ENCODE measurements at regions of chr4 and their contacts with region 1.

Region 1: GRCh38 chr4:52861879-52862616 is at the start of gene RASL11B:
- H3K4me3 Mint-ChIP-seq: peak within 1 kb of the TSS; percentile 84
- H3K27ac Mint-ChIP-seq: no peak within 1 kb of the TSS
- H3K4me1 Mint-ChIP-seq: peaks cover 7% of the 10 kb centered on the region
- H3K27me3 Mint-ChIP-seq: peaks cover 48% of the 10 kb centered on the region

Region 2: GRCh38 chr4:52560844-52561280 is 301.2 kb before region 1 on chr4:
- intact Hi-C with region 1: no loop called
- H3K4me3 Mint-ChIP-seq: no peak overlapping the region
- H3K27ac Mint-ChIP-seq: no peak overlapping the region
- H3K4me1 Mint-ChIP-seq: no peaks in the 10 kb centered on the region
- H3K27me3 Mint-ChIP-seq: no peaks in the 10 kb centered on the region

Region 3: GRCh38 chr4:52659001-52659721 is 202.9 kb before region 1 on chr4 and contains the start of gene USP46:
- intact Hi-C with region 1: loop called (anchors 10 kb)
- H3K4me3 Mint-ChIP-seq: peak within 1 kb of the TSS; percentile 83
- H3K27ac Mint-ChIP-seq: peak within 1 kb of the TSS; percentile 80
- H3K4me1 Mint-ChIP-seq: peaks cover 49% of the 10 kb centered on the region
- H3K27me3 Mint-ChIP-seq: peaks cover 6% of the 10 kb centered on the region

Region 4: GRCh38 chr4:52712172-52712990 is 149.7 kb before region 1 on chr4:
- intact Hi-C with region 1: loop called (anchors 5 kb)
- H3K4me3 Mint-ChIP-seq: peak overlapping the region; percentile 72
- H3K27ac Mint-ChIP-seq: peak overlapping the region; percentile 46
- H3K4me1 Mint-ChIP-seq: peaks cover 9% of the 10 kb centered on the region
- H3K27me3 Mint-ChIP-seq: peaks cover 6% of the 10 kb centered on the region

Region 5: DNA sequence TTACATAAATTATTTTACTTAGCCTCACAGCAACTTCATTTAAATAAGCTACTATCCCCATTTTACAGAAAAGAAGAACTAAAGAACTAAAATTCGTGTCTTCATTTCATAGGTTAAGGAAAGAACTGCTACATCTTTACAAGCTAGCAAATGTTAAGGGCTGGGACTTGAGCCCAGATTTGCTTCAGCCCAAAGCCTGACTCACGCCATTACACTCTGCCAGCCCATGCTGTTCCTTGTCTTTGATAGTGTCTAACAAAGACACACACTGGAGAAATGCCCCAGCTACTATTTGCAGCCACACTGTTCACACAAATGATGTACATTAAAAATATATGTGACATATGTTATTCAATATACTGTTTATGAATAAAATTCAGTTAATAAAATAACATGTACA is 81.8 kb before region 1 on chr4:
- intact Hi-C with region 1: no loop called
- H3K4me3 Mint-ChIP-seq: no peak overlapping the region
- H3K27ac Mint-ChIP-seq: no peak overlapping the region
- H3K4me1 Mint-ChIP-seq: no peaks in the 10 kb centered on the region
- H3K27me3 Mint-ChIP-seq: no peaks in the 10 kb centered on the region

Region 6: DNA sequence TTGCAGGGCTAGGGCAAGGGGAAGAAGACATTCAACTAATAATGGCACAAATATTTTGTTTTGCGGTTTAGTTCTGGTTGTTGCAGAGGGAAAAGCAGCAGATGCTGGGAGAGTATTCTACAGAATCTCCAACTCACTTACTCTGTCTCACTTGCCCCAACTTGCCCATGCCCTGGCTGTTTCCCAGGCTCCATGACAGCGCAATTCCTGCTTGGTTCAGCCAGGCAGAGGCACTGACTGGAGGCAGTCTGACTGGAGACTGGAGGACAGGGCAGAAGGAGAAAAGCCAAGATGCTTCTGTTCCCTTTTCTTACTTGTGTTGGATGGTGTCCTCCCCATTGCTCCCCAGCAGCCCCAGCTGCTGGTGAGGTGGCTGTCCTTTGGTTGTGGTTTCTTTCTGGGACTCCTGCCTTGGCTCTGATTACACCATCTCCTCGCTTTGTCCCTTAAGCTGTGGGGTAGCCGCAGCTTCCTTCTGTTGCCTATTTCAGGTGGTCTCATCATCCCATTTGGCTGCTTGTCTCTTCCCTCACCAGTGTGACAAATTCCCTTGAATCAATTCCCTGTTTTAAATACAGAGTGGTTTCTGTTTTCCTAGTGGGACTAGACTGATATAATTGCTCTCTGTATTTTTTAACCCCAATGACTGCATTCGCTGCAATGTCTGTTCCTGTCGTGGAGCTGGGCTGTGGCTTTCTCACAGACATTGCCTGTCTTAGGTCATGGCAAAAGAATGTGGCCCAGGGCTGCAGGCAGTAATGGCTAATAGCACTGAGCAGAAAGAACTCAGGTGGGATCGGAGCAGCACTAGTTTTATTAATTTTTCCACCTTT is 24.1 kb before region 1 on chr4:
- intact Hi-C with region 1: no loop called
- H3K4me3 Mint-ChIP-seq: no peak overlapping the region
- H3K27ac Mint-ChIP-seq: no peak overlapping the region
- H3K4me1 Mint-ChIP-seq: peaks cover 2% of the 10 kb centered on the region
- H3K27me3 Mint-ChIP-seq: peaks cover 2% of the 10 kb centered on the region